HCT116 (cell line): ENCODE measurements at regions of chr9 and their contacts with region 1.

Region 1: GRCh38 chr9:29100762-29101161 is 1527.5 kb upstream of the C9orf72 start:
- DNase-seq: no peak
- ATAC-seq: no peak
- H3K4me3 ChIP-seq: no peak overlapping the region
- H3K27ac ChIP-seq: no peak overlapping the region
- H3K4me1 ChIP-seq: no peaks in the 10 kb centered on the region
- H3K27me3 ChIP-seq: no peaks in the 10 kb centered on the region
- CTCF ChIP-seq: no peak
- POLR2A ChIP-seq: no peak
- RAD21 ChIP-seq: no peak

Region 2: GRCh38 chr9:29150606-29151005 is 49.8 kb after region 1 on chr9:
- CTCF ChIA-PET with region 1: no interaction called
- POLR2A ChIA-PET with region 1: no interaction called
- RAD21 ChIA-PET with region 1: no interaction called
- intact Hi-C with region 1: loop called (anchors 5 kb)
- DNase-seq: no peak
- ATAC-seq: no peak
- H3K4me3 ChIP-seq: no peak overlapping the region
- H3K27ac ChIP-seq: no peak overlapping the region
- H3K4me1 ChIP-seq: no peaks in the 10 kb centered on the region
- H3K27me3 ChIP-seq: no peaks in the 10 kb centered on the region
- CTCF ChIP-seq: no peak
- POLR2A ChIP-seq: no peak
- RAD21 ChIP-seq: no peak

Region 3: DNA sequence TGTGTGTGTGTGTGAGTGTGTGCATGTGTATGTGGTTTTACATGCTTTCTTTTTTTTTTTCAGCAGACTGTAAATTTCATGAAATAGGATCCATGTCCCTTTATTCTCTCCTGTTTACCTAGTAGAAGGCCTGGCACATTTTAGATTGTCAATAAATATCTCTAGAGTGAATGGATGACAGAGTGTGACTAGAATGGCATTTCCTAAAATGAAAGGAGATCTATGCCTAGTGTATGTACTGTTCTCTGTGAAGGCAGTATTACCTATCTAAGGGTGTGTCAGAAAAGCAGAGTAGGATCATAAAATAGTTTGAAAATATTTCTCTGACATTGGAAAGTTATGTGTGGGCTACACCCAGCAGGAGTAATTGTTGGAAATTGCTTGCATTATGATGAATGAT is 348.5 kb after region 1 on chr9:
- CTCF ChIA-PET with region 1: no interaction called
- POLR2A ChIA-PET with region 1: no interaction called
- RAD21 ChIA-PET with region 1: no interaction called
- intact Hi-C with region 1: no loop called
- DNase-seq: no peak
- ATAC-seq: no peak
- H3K4me3 ChIP-seq: no peak overlapping the region
- H3K27ac ChIP-seq: no peak overlapping the region
- H3K4me1 ChIP-seq: no peaks in the 10 kb centered on the region
- H3K27me3 ChIP-seq: no peaks in the 10 kb centered on the region
- CTCF ChIP-seq: no peak
- POLR2A ChIP-seq: no peak
- RAD21 ChIP-seq: no peak